Posterior vena cava (tissue), 2 donors: ENCODE measurements at regions of chr7 and their contacts with region 1.

Region 1: DNA sequence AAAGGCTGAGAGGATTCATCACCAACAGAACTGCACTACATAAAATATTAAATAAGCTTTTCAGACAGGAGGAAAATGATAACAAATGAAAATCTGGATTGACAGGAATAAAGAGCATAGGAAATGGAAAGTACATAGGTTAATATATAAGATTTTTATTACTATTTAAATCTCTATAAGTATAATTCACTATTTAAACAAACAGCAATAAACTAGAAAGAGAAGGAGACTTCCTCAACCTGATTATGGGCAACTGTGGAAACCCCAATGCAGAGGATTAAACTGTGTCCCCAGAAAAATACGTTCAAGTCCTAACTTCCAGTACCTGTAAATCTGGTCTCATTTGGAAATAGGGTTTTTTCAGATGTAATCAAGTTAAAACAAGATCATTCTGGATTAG is 14.8 kb upstream of the ASL start:
- DNase-seq: no peak

Region 2: GRCh38 chr7:66797471-66797870 is 736.7 kb after region 1 on chr7:
- intact Hi-C with region 1: loop called in 1 of 2 experiments (anchors 5 kb)
- DNase-seq: no peak